ENCODE measurements at regions of chr4 and their contacts with region 1.

Region 1: DNA sequence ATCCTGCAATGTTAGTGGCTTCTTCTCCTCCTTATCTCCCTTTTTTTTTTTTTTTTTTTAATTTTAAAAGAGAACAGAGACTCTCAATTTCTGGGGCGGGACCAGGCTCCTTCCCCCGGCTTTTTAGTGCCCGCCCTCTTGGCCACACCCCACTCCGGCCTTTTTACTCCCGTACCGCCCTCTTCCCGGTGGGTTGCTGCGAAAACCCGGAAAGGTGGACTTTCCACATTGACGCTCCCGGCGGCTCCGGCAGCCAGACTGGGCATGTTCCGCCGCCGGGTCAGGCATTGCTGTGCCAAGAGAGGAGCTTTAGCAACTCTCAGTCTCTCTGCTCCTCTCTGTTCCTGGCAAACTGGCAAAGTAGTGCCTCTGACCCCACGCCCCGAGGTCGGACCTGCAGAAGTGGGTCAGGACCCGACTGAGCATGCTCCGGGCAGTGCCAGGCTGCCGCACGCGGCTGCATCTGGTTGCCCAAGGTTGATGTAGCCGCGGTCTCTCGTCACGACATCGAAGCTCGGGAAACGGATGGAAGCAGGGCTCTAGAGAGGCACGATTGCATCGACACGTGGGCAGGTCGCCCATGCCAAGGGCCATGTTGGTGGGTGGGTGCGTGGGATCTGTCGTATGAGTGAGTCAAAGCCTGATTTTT is 1.1 kb upstream of the MFAP3L start:
- DNase-seq: peak; percentile 97 to 98
- ATAC-seq: peak; percentile 96
- H3K4me3 ChIP-seq: peak overlapping the region; percentile 71 to 99
- H3K27ac ChIP-seq: no peak overlapping the region
- H3K4me1 ChIP-seq: no peaks in the 10 kb centered on the region
- H3K27me3 ChIP-seq: no peaks in the 10 kb centered on the region

Region 2: GRCh38 chr4:169619959-169620879 is 407.1 kb before region 1 on chr4 and contains the start of gene CLCN3:
- intact Hi-C with region 1: loop called in 1 of 2 experiments (anchors 10 kb)
- DNase-seq: peak; percentile 99 to 100
- ATAC-seq: peak; percentile 100
- H3K4me3 ChIP-seq: peak within 1 kb of the TSS; percentile 73 to 89
- H3K27ac ChIP-seq: peak within 1 kb of the TSS; percentile 14 to 79
- H3K4me1 ChIP-seq: peaks cover 0 to 2% of the 10 kb centered on the region in 2 donors
- H3K27me3 ChIP-seq: no peaks in the 10 kb centered on the region
- total RNA-seq, gene CLCN3: 19.1 to 29.1 TPM

Region 3: GRCh38 chr4:169810325-169811323 is 216.7 kb before region 1 on chr4:
- intact Hi-C with region 1: no loop called
- DNase-seq: no peak
- ATAC-seq: no peak
- H3K4me3 ChIP-seq: peak overlapping the region in 1 of 2 donors; percentile 59
- H3K27ac ChIP-seq: no peak overlapping the region
- H3K4me1 ChIP-seq: no peaks in the 10 kb centered on the region
- H3K27me3 ChIP-seq: no peaks in the 10 kb centered on the region

Region 4: DNA sequence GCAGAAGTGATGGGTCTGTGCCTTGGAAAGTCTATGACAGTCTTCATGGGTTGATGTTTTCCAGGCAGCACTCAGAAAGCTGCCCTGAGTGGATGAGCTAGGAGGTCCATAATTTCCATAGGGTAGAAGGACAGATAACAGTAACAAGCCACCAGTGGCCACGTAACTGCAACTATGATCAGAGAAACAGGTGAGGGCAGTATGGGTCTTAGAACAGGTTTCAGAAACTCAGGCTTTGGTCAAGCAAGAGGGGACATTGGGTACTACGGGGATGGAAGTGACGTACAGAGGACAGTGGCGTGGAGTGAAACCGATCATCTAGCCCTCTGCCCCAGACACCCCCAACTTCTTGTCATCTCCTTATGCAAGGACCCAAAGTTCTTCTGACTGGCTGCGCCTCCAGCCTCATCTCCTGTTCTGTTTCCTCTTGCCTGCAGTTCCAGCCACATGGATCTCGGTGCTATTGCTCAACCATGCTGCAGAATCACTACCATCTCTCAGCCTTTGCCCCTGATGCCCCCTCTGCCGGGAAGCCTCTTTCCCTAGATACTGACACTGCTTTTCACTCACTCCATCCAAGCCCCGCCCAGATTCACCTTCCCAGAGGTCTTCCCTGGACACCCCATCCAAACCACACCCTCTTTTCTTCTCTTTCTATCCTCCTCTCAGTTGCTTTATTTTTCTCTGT is 124.5 kb before region 1 on chr4:
- intact Hi-C with region 1: loop called in 1 of 2 experiments (anchors 5 kb)
- DNase-seq: no peak
- ATAC-seq: peak; percentile 69
- H3K4me3 ChIP-seq: no peak overlapping the region
- H3K27ac ChIP-seq: no peak overlapping the region
- H3K4me1 ChIP-seq: no peaks in the 10 kb centered on the region
- H3K27me3 ChIP-seq: no peaks in the 10 kb centered on the region

Region 5: DNA sequence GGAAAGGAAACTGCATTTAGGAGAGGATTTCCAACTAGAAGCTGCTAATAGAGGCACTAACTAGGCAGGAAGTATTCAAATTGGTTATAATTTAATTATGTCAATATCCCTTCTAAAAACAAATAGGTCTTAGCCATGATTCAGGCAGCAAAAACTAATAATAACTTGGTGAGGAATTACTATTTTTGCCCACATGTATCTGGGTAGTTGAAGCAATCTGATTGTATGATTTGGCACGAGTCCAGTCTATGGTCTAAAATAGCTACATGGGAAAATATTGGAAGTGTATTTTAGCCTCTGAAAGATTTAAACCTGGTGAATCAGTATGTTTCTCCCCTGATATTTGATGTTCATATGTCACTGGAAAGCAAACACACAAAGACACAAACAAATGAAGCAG is 63.3 kb before region 1 on chr4:
- intact Hi-C with region 1: loop called (anchors 5 kb)
- DNase-seq: no peak
- ATAC-seq: peak; percentile 48
- H3K4me3 ChIP-seq: no peak overlapping the region
- H3K27ac ChIP-seq: no peak overlapping the region
- H3K4me1 ChIP-seq: peaks cover 2 to 10% of the 10 kb centered on the region in 2 donors
- H3K27me3 ChIP-seq: no peaks in the 10 kb centered on the region

Region 6: DNA sequence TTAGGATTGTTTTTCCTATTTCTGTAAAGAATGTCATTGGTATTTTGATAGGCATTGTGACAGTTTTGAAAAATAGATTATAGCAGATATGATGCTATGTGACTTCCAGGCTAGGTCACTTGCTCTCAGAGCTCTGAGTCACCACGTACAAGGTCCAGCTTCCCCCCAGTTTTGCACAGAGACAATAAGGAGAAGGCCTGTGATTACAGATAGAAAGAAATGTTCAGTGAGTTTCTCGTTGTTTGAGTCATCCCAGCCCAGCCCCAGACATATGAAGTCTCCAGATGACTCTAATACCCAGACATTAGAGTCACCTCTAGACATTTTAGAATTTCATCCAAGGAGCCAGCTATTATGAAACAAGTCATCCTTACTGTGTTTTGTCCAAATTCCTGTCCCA is 58.3 kb before region 1 on chr4:
- intact Hi-C with region 1: loop called (anchors 5 kb)
- DNase-seq: no peak
- ATAC-seq: no peak
- H3K4me3 ChIP-seq: no peak overlapping the region
- H3K27ac ChIP-seq: no peak overlapping the region
- H3K4me1 ChIP-seq: peaks cover 0 to 7% of the 10 kb centered on the region in 2 donors
- H3K27me3 ChIP-seq: no peaks in the 10 kb centered on the region

Measured in aorta (tissue), 5 donors.